ENCODE measurements at regions of chr1 and their contacts with region 1.

Region 1: DNA sequence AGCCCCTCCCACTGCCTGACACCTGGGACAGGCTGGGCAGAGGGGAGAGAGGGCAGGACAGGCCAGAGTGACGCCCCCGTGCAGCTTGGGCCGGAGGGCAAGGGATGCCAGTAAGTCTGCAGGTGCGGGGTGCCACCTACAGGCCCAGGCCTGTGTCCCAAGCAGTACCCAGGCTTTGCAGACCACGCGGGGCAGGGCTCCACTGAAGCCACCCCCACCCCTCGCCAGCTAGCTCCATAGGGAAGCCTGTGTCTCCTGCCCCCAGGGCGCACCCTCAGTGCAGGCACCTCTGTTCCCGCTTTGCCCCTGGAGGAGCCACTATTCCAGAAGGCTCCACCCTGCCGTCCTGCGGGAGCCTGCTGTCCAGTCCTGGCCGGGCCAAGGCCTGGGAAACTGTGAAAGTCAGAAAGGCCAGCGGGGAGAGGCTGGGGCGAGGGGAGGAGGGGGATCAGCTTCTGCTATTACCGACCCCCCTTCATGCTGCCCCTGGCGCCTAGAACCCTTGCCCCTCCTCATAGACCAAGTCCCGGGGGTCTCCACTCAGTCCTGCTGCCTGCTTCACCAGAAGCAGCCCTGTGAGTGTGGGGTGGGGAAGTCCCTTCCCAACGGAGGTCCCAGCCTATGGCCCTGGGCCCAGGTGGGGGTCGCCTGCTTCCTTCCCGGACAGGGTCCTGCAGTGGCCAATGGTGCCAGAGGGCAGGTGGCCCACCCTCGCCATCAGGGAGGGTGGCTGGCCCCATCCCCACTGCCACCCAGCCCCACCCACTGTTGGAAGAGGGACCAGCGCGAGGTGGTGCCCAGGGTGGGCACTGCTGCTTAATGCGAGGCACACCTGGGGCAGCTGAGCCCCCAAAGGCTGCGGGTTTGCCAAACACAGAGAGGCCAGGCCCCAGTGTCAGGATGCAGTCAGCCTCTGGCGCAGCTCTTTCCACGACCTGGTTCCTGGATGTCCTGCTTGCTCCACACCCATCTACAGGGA is 54.4 kb downstream of the KCNAB2 start:
- DNase-seq: no peak
- H3K4me3 ChIP-seq: no peak overlapping the region
- H3K27ac ChIP-seq: no peak overlapping the region
- H3K4me1 ChIP-seq: no peaks in the 10 kb centered on the region
- H3K27me3 ChIP-seq: peaks cover 3% of the 10 kb centered on the region
- CTCF ChIP-seq: no peak
- POLR2A ChIP-seq: no peak

Region 2: GRCh38 chr1:6033986-6034749 is 65.9 kb before region 1 on chr1:
- intact Hi-C with region 1: loop called in 1 of 2 experiments (anchors 10 kb)
- DNase-seq: peak; percentile 33 to 81 (median 59)
- H3K4me3 ChIP-seq: no peak overlapping the region
- H3K27ac ChIP-seq: no peak overlapping the region
- H3K4me1 ChIP-seq: no peaks in the 10 kb centered on the region
- H3K27me3 ChIP-seq: no peaks in the 10 kb centered on the region
- CTCF ChIP-seq: peak; percentile 54 to 69 (median 58)
- POLR2A ChIP-seq: no peak